Natural killer cell (primary cell): ENCODE measurements at regions of chr12 and their contacts with region 1.

Region 1: GRCh38 chr12:92551853-92552397 is 150.9 kb upstream of the PLEKHG7 start:
- DNase-seq: peak in 1 of 2 donors; percentile 28
- ATAC-seq: peak; percentile 51 to 67 (median 55)
- H3K4me3 ChIP-seq: no peak overlapping the region
- H3K4me3 Mint-ChIP-seq: no peak overlapping the region
- H3K27ac ChIP-seq: peak overlapping the region; percentile 80
- H3K27ac Mint-ChIP-seq: no peak overlapping the region
- H3K4me1 ChIP-seq: peaks cover 40% of the 10 kb centered on the region
- H3K4me1 Mint-ChIP-seq: peaks cover 11 to 14% of the 10 kb centered on the region in 2 donors
- H3K27me3 ChIP-seq: no peaks in the 10 kb centered on the region
- H3K27me3 Mint-ChIP-seq: no peaks in the 10 kb centered on the region
- CTCF ChIP-seq: no peak

Region 2: GRCh38 chr12:92516277-92516600 is 35.7 kb before region 1 on chr12:
- intact Hi-C with region 1: loop called (anchors 5 kb)
- DNase-seq: no peak
- ATAC-seq: no peak
- H3K4me3 ChIP-seq: no peak overlapping the region
- H3K4me3 Mint-ChIP-seq: no peak overlapping the region
- H3K27ac ChIP-seq: no peak overlapping the region
- H3K27ac Mint-ChIP-seq: peak overlapping the region in 1 of 2 donors; percentile 33
- H3K4me1 ChIP-seq: no peaks in the 10 kb centered on the region
- H3K4me1 Mint-ChIP-seq: peaks cover 5% of the 10 kb centered on the region in 2 donors
- H3K27me3 ChIP-seq: no peaks in the 10 kb centered on the region
- H3K27me3 Mint-ChIP-seq: no peaks in the 10 kb centered on the region
- CTCF ChIP-seq: no peak

Region 3: DNA sequence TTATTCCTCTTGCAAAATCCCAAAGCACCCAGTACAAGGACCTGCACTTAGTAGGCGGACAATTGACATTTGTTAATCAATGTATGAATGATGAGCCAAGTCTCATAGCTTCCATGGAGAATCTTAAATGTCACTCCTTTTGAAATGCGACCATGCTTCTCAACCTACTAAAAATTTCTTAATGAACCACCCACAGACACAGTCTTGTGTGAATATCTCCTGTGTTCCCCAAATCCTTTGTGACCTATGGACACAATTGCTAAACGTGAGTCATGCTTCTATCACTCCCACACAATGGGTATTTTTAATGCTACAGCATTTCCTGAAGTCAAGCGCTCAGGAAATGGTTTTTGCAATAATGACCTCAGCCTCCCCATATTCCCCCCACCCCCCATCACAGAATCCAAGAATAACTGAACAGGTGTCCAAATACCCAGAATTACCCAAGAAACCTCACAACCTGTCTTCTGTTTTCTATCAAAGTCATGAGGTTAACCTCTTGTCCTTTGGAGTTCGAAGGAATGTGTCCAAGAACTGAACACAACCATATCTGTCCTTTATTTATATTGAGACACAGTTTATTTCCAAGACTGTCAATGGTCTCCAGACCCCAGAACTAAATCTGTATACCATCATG is 12.7 kb before region 1 on chr12:
- intact Hi-C with region 1: loop called (anchors 2 kb)
- DNase-seq: peak in 1 of 2 donors; percentile 54
- ATAC-seq: peak; percentile 56 to 70 (median 66)
- H3K4me3 ChIP-seq: no peak overlapping the region
- H3K4me3 Mint-ChIP-seq: peak overlapping the region; percentile 81
- H3K27ac ChIP-seq: peak overlapping the region; percentile 92
- H3K27ac Mint-ChIP-seq: peak overlapping the region; percentile 97 to 99
- H3K4me1 ChIP-seq: peaks cover 56% of the 10 kb centered on the region
- H3K4me1 Mint-ChIP-seq: peaks cover 73 to 75% of the 10 kb centered on the region in 2 donors
- H3K27me3 ChIP-seq: no peaks in the 10 kb centered on the region
- H3K27me3 Mint-ChIP-seq: no peaks in the 10 kb centered on the region
- CTCF ChIP-seq: no peak

Region 4: DNA sequence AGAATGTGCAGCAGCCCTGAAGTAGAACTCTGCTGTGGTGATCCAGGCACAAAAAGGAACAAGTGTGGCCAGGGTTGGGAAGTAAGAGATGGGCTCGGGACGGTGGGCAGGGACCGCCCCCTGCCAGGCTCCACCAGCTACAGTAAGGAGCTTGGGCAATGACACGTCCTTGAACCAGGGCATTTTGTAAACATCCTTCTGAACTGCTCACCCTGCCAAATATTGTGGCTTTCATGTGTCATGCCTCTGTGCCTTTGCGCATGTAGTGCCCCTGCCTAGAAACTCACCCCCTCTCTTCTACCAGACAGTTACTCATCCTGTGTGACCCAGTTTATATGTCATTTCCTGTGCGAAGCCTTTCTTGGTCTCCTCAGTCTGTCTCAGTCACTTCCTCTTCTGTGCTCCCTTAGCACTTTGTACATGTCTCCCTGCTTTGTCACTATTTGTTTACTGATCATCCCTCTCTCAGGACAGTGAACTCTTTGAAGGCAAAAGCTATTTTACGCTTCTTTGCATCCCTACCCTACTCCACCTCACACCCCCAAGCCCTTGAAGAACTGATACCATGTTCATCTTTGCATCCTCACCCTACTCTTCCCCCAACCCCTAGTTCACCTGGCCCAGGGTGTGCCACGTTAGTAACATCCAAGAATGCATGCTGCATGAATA is 41.9 kb after region 1 on chr12:
- intact Hi-C with region 1: loop called (anchors 5 kb)
- DNase-seq: peak; percentile 70 to 96
- ATAC-seq: peak; percentile 86 to 97 (median 91)
- H3K4me3 ChIP-seq: no peak overlapping the region
- H3K4me3 Mint-ChIP-seq: peak overlapping the region; percentile 83
- H3K27ac ChIP-seq: peak overlapping the region; percentile 99
- H3K27ac Mint-ChIP-seq: peak overlapping the region; percentile 91 to 98
- H3K4me1 ChIP-seq: peaks cover 21% of the 10 kb centered on the region
- H3K4me1 Mint-ChIP-seq: peaks cover 33 to 49% of the 10 kb centered on the region in 2 donors
- H3K27me3 ChIP-seq: no peaks in the 10 kb centered on the region
- H3K27me3 Mint-ChIP-seq: no peaks in the 10 kb centered on the region
- CTCF ChIP-seq: no peak